ENCODE measurements at regions of chrX and their contacts with region 1.

Region 1: GRCh38 chrX:154097597-154098541 is at the start of gene MECP2:
- DNase-seq: peak; percentile 87 to 89 (median 87)
- H3K4me3 ChIP-seq: peak within 1 kb of the TSS; percentile 75 to 76
- H3K4me3 Mint-ChIP-seq: peak within 1 kb of the TSS; percentile 89 to 97 (median 96)
- H3K27ac ChIP-seq: peak within 1 kb of the TSS; percentile 96
- H3K27ac Mint-ChIP-seq: peak within 1 kb of the TSS; percentile 94 to 98 (median 97)
- H3K4me1 ChIP-seq: peaks cover 38% of the 10 kb centered on the region
- H3K4me1 Mint-ChIP-seq: peaks cover 25 to 47% (median 28%) of the 10 kb centered on the region in 4 donors
- H3K27me3 ChIP-seq: no peaks in the 10 kb centered on the region
- H3K27me3 Mint-ChIP-seq: no peaks in the 10 kb centered on the region
- total RNA-seq, gene MECP2: 103 to 108 TPM

Region 2: DNA sequence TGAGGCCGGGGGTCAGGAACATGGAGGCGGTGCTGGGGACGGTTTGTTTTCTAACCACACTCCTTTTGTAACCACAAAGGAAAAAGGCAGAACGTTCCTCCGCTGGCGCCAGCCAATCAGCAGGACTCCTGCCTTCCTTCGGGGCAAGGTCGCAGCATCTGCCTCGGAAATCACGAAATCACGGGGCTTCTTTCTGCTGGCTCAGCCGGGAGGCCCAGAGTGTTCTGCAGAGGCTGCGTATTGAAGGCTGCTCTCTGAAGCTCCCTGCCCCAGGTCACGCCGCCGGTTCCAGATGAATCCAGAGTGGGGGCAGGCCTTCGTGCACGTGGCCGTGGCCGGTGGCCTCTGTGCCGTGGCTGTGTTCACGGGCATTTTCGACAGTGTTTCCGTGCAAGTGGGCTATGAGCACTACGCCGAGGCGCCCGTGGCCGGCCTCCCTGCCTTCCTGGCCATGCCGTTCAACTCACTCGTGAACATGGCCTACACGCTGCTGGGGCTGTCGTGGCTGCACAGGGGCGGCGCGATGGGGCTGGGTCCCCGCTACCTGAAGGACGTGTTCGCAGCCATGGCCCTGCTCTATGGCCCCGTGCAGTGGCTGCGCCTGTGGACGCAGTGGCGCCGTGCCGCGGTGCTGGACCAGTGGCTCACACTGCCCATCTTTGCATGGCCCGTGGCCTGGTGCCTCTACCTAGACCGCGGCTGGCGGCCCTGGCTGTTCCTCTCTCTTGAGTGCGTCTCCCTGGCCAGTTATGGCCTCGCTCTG is 115.9 kb before region 1 on chrX:
- CTCF ChIA-PET with region 1: no interaction called
- POLR2A ChIA-PET with region 1: interaction called, 5 read pairs
- intact Hi-C with region 1: loop called (anchors 5 kb)
- DNase-seq: peak; percentile 64 to 72 (median 68)
- H3K4me3 ChIP-seq: peak overlapping the region in 1 of 2 donors; percentile 19
- H3K4me3 Mint-ChIP-seq: peak overlapping the region; percentile 59 to 86 (median 74)
- H3K27ac ChIP-seq: peak overlapping the region; percentile 52
- H3K27ac Mint-ChIP-seq: peak overlapping the region; percentile 90 to 97 (median 94)
- H3K4me1 ChIP-seq: peaks cover 56% of the 10 kb centered on the region
- H3K4me1 Mint-ChIP-seq: peaks cover 22 to 67% (median 40%) of the 10 kb centered on the region in 4 donors
- H3K27me3 ChIP-seq: no peaks in the 10 kb centered on the region
- H3K27me3 Mint-ChIP-seq: no peaks in the 10 kb centered on the region

Region 3: DNA sequence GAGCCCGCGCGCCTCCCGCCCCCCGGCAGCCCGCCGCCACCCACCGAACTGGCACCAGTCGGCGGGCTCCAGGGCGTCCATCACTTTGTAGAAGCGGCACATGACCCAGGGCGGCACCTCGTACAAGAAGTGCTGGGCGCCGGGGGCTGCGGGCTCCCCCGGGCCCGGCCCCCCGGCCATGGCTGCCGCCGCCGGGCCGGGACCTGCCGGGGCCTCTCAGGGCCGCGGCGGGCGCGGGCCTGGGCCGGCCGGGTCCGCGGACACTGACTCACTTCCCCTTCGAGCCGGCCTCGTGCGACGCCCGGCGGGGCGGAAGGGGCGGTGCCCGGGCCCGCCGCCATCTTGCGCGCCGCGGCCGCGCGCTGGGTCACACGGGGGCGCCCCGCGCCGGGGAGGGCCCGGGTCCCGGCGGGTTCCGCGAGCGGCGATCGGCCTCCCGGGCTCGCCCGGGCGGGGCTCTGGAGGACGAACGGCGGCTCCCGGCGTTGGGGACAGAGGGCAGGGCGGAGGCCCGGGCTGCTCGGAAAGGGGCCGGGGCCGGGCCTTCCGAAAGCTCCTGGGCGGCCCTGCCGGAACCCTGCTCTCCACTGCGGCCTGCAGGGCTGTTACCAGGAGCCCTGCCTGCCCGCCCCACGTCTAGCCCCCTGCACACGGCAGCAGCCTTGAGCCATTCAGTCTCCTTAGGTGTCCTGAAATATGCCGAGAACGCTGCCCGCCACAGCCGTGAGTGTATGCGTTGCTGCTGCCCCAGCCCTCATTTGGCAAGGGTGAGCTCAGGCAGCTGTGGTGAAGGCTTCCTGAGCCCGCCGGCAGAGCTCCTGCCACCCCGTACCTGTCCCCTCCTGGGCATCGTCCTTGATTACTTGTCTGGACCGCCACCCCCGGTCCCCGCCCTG is 78.0 kb before region 1 on chrX and contains the start of gene IRAK1:
- CTCF ChIA-PET with region 1: interaction called, 3 read pairs
- POLR2A ChIA-PET with region 1: interaction called, 5 read pairs
- intact Hi-C with region 1: loop called (anchors 10 kb)
- DNase-seq: peak; percentile 36 to 62 (median 54)
- H3K4me3 ChIP-seq: peak within 1 kb of the TSS; percentile 28 to 60
- H3K4me3 Mint-ChIP-seq: peak within 1 kb of the TSS; percentile 86 to 93 (median 89)
- H3K27ac ChIP-seq: peak within 1 kb of the TSS; percentile 78
- H3K27ac Mint-ChIP-seq: peak within 1 kb of the TSS; percentile 91 to 95 (median 94)
- H3K4me1 ChIP-seq: peaks cover 18% of the 10 kb centered on the region
- H3K4me1 Mint-ChIP-seq: peaks cover 3 to 29% (median 15%) of the 10 kb centered on the region in 4 donors
- H3K27me3 ChIP-seq: no peaks in the 10 kb centered on the region
- H3K27me3 Mint-ChIP-seq: no peaks in the 10 kb centered on the region
- total RNA-seq, gene IRAK1: 66.9 to 74.5 TPM

Region 4: DNA sequence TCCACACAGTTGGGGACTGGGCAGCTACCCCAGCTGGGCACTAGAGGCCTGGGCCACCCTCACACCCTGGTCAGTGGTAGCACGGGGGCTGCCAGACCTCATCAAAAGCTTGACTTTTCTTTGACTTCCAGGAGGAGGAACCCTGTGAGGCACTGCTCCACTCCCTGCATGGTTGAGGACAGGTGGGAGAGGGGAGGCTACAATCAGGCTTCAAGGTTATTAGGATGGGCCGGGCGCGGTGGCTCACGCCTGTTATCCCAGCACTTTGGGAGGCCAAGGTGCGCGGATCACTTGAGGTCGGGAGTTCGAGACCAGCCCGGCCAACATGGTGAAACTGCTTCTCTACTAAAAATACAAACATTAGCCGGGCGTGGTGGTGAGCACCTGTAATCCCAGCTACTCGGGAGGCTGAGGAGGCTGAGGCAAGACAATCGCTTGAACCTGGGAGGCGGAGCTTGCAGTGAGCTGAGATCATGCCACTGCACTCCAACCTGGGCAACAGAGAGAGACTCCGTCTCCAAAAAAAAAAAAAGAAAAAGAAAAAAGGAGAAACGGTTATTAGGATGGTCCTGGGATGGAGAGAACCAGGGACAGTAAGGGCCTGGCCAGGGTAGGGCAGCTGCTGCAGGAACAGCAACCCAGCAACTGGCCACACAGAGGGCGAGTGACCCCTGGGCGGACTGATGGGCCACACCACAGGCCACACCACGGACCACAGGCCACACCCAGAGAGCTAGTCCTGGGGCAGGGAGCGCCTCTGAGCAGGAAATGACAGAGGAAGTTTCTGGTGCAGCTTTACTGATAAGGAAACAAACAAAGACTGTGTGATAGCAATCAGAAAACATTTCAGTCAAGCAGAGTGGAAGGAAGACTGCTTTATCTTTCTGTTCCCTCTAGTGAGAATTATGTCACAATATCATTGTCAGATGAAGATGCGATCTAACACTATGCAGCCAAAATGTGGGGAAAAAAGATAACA is 25.7 kb after region 1 on chrX:
- CTCF ChIA-PET with region 1: interaction called, 5 read pairs
- POLR2A ChIA-PET with region 1: interaction called, 13 read pairs
- intact Hi-C with region 1: no loop called
- DNase-seq: peak; percentile 48 to 64 (median 58)
- H3K4me3 ChIP-seq: no peak overlapping the region
- H3K4me3 Mint-ChIP-seq: peak overlapping the region; percentile 33 to 79 (median 66)
- H3K27ac ChIP-seq: no peak overlapping the region
- H3K27ac Mint-ChIP-seq: peak overlapping the region; percentile 19 to 86 (median 73)
- H3K4me1 ChIP-seq: peaks cover 37% of the 10 kb centered on the region
- H3K4me1 Mint-ChIP-seq: peaks cover 11 to 46% (median 20%) of the 10 kb centered on the region in 4 donors
- H3K27me3 ChIP-seq: no peaks in the 10 kb centered on the region
- H3K27me3 Mint-ChIP-seq: no peaks in the 10 kb centered on the region

Region 5: DNA sequence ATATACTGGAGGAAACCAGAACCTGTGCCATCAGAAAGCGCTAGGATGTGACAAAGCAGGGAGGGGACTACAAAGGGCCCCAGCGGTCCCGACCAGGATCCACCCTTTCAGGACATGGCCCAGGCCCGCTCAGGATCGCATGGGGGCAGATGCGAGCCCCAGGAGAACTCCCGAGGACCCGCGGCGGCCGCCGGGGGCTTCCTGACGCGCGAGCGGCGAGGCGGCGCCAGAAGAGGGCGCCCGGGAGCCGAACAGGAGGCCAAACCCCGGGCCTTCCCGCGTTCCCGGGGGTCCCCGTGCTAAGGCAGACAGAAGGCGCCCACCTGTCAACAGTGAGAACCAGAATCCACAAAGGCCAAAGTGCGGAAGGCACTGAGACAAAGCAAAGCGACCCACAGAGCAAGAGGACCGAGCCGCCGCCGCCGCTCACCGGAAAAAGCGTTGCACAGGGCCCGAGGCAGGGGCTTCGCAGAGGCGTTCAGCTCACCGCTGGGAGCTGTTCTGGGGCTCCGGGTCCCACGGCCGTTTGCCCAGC is 38.8 kb after region 1 on chrX:
- CTCF ChIA-PET with region 1: interaction called, 8 read pairs
- POLR2A ChIA-PET with region 1: interaction called, 14 read pairs
- intact Hi-C with region 1: no loop called
- DNase-seq: peak; percentile 69 to 76 (median 71)
- H3K4me3 ChIP-seq: peak overlapping the region in 1 of 2 donors; percentile 15
- H3K4me3 Mint-ChIP-seq: peak overlapping the region; percentile 62 to 86 (median 77)
- H3K27ac ChIP-seq: peak overlapping the region; percentile 71
- H3K27ac Mint-ChIP-seq: peak overlapping the region; percentile 80 to 99 (median 96)
- H3K4me1 ChIP-seq: peaks cover 42% of the 10 kb centered on the region
- H3K4me1 Mint-ChIP-seq: peaks cover 6 to 40% (median 16%) of the 10 kb centered on the region in 4 donors
- H3K27me3 ChIP-seq: no peaks in the 10 kb centered on the region
- H3K27me3 Mint-ChIP-seq: no peaks in the 10 kb centered on the region

Region 6: DNA sequence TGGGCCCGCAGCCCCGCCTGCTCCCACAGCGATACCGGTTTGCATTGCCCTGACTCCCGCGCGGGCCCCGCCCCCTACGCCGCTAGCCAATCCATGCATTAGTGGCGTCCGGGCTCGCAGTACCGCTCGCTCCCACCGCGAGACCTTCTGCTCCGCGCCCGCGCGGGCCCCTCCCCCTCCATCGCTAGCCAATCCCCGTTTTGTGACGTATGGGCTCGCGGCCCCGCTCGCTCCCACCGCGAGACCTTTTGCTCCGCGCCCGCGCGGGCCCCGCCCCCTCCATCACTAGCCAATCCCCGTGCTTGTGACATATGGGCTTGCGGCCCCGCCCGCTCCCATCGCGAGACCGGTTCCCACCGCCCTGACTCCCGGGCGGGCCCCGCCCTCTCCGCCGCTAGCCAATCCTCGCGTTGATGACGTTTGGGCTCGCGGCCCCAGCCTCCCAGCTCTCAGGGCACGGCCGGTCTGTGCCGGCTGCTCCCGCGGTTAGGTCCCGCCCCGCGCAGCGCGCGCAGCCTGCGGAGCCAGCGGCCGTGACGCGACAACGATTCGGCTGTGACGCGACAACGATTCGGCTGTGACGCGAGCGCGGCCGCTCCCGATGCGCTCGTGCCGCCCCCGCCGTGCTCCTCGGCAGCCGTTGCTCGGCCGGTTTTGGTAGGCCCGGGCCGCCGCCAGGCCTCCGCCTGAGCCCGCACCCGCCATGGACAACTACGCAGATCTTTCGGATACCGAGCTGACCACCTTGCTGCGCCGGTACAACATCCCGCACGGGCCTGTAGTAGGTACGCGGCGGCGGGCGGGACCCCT is 281.1 kb after region 1 on chrX and contains the start of gene EMD:
- CTCF ChIA-PET with region 1: interaction called, 8 read pairs
- POLR2A ChIA-PET with region 1: interaction called, 4 read pairs
- intact Hi-C with region 1: loop called (anchors 10 kb)
- DNase-seq: peak; percentile 93 to 98 (median 97)
- H3K4me3 ChIP-seq: peak within 1 kb of the TSS; percentile 62 to 66
- H3K4me3 Mint-ChIP-seq: peak within 1 kb of the TSS; percentile 78 to 91 (median 83)
- H3K27ac ChIP-seq: peak within 1 kb of the TSS; percentile 99
- H3K27ac Mint-ChIP-seq: peak within 1 kb of the TSS; percentile 92 to 97 (median 95)
- H3K4me1 ChIP-seq: peaks cover 28% of the 10 kb centered on the region
- H3K4me1 Mint-ChIP-seq: peaks cover 4 to 23% (median 11%) of the 10 kb centered on the region in 4 donors
- H3K27me3 ChIP-seq: no peaks in the 10 kb centered on the region
- H3K27me3 Mint-ChIP-seq: no peaks in the 10 kb centered on the region
- total RNA-seq, gene EMD: 84.3 to 88.7 TPM

Region 7: GRCh38 chrX:154443992-154444754 is 346.3 kb after region 1 on chrX and contains the start of gene FAM50A:
- CTCF ChIA-PET with region 1: no interaction called
- POLR2A ChIA-PET with region 1: no interaction called
- intact Hi-C with region 1: no loop called
- DNase-seq: peak; percentile 59 to 67 (median 62)
- H3K4me3 ChIP-seq: peak within 1 kb of the TSS; percentile 3 to 45
- H3K4me3 Mint-ChIP-seq: peak within 1 kb of the TSS; percentile 63 to 86 (median 77)
- H3K27ac ChIP-seq: peak within 1 kb of the TSS; percentile 69
- H3K27ac Mint-ChIP-seq: peak within 1 kb of the TSS; percentile 81 to 95 (median 89)
- H3K4me1 ChIP-seq: peaks cover 49% of the 10 kb centered on the region
- H3K4me1 Mint-ChIP-seq: peaks cover 7 to 51% (median 23%) of the 10 kb centered on the region in 4 donors
- H3K27me3 ChIP-seq: no peaks in the 10 kb centered on the region
- H3K27me3 Mint-ChIP-seq: no peaks in the 10 kb centered on the region
- total RNA-seq, gene FAM50A: 65.2 to 70.3 TPM

Measured in CD4-positive, alpha-beta memory T cell (primary cell).